ENCODE measurements at regions of chr1 and their contacts with region 1.

Region 1: DNA sequence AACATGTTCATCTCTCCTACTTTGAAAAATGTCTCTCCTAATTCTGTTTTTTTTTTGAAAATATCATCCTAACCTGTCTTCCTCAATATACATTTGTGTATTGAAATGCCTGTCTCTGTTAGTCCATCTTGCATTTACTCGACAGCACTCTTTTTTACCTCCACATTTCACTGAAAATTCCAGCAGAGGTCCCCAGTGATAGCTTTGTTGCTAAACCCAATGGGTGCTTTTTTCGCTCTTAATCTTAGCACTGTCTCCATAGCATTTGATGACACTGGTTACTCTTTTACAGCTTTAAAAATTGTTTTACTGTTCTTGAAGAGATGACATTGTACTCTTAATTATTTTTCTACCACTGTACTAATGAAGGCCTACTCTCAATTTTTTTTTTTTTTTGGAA is 10.8 kb downstream of the OSBPL9 start:
- DNase-seq: peak in 17 of 42 donors; percentile 20 to 68 (median 35)

Region 2: GRCh38 chr1:51729824-51730301 is 102.2 kb after region 1 on chr1:
- intact Hi-C with region 1: loop called (anchors 10 kb)
- DNase-seq: peak in 13 of 42 donors; percentile 11 to 44 (median 26)

Measured in head of caudate nucleus (tissue), 42 donors.